B cell (primary cell): ENCODE measurements at regions of chr20 and their contacts with region 1.

Region 1: GRCh38 chr20:18496740-18497592 is at the start of gene RBBP9:
- DNase-seq: peak; percentile 81
- ATAC-seq: peak; percentile 100
- H3K4me3 ChIP-seq: peak within 1 kb of the TSS; percentile 74 to 96 (median 87)
- H3K4me3 Mint-ChIP-seq: peak within 1 kb of the TSS; percentile 98
- H3K27ac ChIP-seq: peak within 1 kb of the TSS; percentile 38 to 78
- H3K27ac Mint-ChIP-seq: peak within 1 kb of the TSS; percentile 89
- H3K4me1 ChIP-seq: peaks cover 7 to 11% of the 10 kb centered on the region in 2 donors
- H3K4me1 Mint-ChIP-seq: peaks cover 18% of the 10 kb centered on the region
- H3K27me3 ChIP-seq: no peaks in the 10 kb centered on the region
- H3K27me3 Mint-ChIP-seq: peaks cover 3% of the 10 kb centered on the region
- CTCF ChIP-seq: no peak
- total RNA-seq, gene RBBP9: 9.3 and 10.2 TPM in 2 replicates

Region 2: DNA sequence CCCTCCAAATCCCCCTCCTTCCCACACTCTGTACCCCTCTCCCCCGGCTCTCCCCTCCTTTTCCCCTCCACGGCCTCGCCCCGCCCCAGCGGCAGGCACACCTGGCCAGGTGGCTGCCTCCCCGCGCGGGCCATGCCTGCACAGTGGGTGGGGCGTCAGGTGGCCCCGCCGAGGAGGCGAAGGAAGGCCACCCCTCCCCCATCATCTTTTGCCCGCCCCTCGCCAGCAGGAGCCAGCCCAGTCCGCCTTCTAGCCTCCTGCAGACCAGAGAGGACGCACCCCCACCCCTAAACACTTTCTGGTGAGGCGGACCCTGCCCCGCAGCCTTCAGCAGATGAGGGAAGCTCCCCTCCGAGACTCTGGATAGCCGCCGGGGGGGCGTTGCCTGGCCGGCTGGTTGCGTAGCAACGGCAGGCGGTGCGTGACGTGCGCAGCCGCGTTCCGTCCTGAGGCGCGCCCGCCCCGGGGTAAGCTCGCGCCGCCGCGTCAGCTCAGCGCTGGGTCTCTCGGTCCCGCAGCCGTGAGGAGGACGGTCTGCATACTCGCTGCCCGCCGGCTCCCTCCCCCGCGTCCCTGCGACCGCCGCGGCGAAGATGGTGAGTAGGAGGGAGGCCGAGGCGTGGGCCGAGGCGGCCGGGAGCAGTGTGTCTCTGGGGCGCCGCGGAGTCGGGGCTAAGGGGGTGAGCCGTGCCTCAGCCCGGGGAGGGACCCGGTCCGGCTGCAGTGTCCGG is 927.2 kb before region 1 on chr20 and contains the start of gene DSTN:
- CTCF ChIA-PET with region 1: no interaction called
- POLR2A ChIA-PET with region 1: no interaction called
- intact Hi-C with region 1: loop called (anchors 2 kb)
- DNase-seq: peak; percentile 93
- ATAC-seq: peak; percentile 91
- H3K4me3 ChIP-seq: peak within 1 kb of the TSS; percentile 77 to 97 (median 83)
- H3K4me3 Mint-ChIP-seq: peak within 1 kb of the TSS; percentile 94
- H3K27ac ChIP-seq: peak within 1 kb of the TSS in 1 of 2 donors; percentile 72
- H3K27ac Mint-ChIP-seq: peak within 1 kb of the TSS; percentile 89
- H3K4me1 ChIP-seq: peaks cover 11 to 14% of the 10 kb centered on the region in 2 donors
- H3K4me1 Mint-ChIP-seq: peaks cover 20% of the 10 kb centered on the region
- H3K27me3 ChIP-seq: peaks cover 0 to 12% (median 2%) of the 10 kb centered on the region in 4 experiments
- H3K27me3 Mint-ChIP-seq: peaks cover 8% of the 10 kb centered on the region
- CTCF ChIP-seq: no peak
- total RNA-seq, gene DSTN: 12.9 and 13.4 TPM in 2 replicates

Region 3: GRCh38 chr20:18587665-18588573 is 91.0 kb after region 1 on chr20 and contains the start of gene DTD1:
- CTCF ChIA-PET with region 1: no interaction called
- POLR2A ChIA-PET with region 1: interaction called, 3 read pairs
- intact Hi-C with region 1: loop called (anchors 1 kb)
- DNase-seq: peak; percentile 89
- ATAC-seq: peak; percentile 96
- H3K4me3 ChIP-seq: peak within 1 kb of the TSS; percentile 47 to 77 (median 73)
- H3K4me3 Mint-ChIP-seq: peak within 1 kb of the TSS; percentile 94
- H3K27ac ChIP-seq: peak within 1 kb of the TSS; percentile 44 to 58
- H3K27ac Mint-ChIP-seq: peak within 1 kb of the TSS; percentile 86
- H3K4me1 ChIP-seq: peaks cover 17% of the 10 kb centered on the region in 2 donors
- H3K4me1 Mint-ChIP-seq: peaks cover 23% of the 10 kb centered on the region
- H3K27me3 ChIP-seq: peaks cover 0 to 10% (median 2%) of the 10 kb centered on the region in 4 experiments
- H3K27me3 Mint-ChIP-seq: peaks cover 8% of the 10 kb centered on the region
- CTCF ChIP-seq: peak; percentile 68
- total RNA-seq, gene DTD1: 18.7 and 18.9 TPM in 2 replicates

Region 4: GRCh38 chr20:18712882-18713281 is 215.9 kb after region 1 on chr20:
- CTCF ChIA-PET with region 1: no interaction called
- POLR2A ChIA-PET with region 1: no interaction called
- intact Hi-C with region 1: no loop called
- DNase-seq: no peak
- ATAC-seq: no peak
- H3K4me3 ChIP-seq: no peak overlapping the region
- H3K4me3 Mint-ChIP-seq: no peak overlapping the region
- H3K27ac ChIP-seq: no peak overlapping the region
- H3K27ac Mint-ChIP-seq: no peak overlapping the region
- H3K4me1 ChIP-seq: no peaks in the 10 kb centered on the region
- H3K4me1 Mint-ChIP-seq: peaks cover 5% of the 10 kb centered on the region
- H3K27me3 ChIP-seq: no peaks in the 10 kb centered on the region
- H3K27me3 Mint-ChIP-seq: no peaks in the 10 kb centered on the region
- CTCF ChIP-seq: no peak